Activated CD8-positive, alpha-beta T cell treated with anti-CD3 and anti-CD28 coated beads for 36 hours (primary cell): ENCODE measurements at regions of chr22 and their contacts with region 1.

Region 1: DNA sequence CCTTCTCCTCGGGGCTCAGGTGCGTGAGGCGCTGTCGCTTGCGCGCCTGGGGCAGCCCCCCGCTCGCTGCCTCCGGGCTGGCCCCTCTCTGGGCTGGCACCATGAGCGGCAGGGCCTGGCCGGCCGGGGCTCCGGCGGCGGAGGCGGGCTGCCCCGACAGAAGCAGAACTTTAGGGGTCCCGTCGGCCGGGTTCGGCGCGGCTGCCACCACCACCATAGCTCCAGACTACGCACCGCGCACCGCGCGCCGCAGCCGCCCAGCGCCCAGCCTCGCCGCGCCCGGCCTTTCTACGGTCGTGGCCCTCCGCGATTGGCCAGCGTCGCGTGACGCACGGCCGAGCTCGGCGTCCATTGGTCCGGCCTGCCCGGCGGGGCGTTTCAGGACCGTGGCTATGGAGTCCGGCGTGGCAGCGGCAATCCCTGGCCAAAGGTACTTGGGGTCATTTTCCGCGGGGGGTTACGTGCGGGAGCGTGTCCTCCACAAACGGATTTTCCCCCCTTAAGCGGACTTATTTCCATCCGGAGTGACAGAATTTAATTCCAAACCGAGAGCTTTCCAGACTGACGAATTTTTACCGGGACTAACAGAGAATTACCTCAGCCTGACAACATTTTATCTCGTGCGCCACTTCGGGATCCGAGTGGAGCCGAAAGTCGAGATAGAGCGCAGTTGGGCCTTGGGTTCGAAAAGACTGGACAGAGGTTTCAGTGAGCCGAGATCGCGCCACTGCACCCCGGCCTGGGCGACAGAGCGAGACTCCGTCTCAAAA is at the start of gene XBP1:
- DNase-seq: peak; percentile 89
- ATAC-seq: peak; percentile 89
- H3K4me3 Mint-ChIP-seq: peak within 1 kb of the TSS; percentile 95
- H3K27ac Mint-ChIP-seq: peak within 1 kb of the TSS; percentile 99
- H3K4me1 Mint-ChIP-seq: peaks cover 44% of the 10 kb centered on the region
- H3K27me3 Mint-ChIP-seq: no peaks in the 10 kb centered on the region
- CTCF ChIP-seq: no peak
- total RNA-seq, gene XBP1: 102 to 103 TPM

Region 2: DNA sequence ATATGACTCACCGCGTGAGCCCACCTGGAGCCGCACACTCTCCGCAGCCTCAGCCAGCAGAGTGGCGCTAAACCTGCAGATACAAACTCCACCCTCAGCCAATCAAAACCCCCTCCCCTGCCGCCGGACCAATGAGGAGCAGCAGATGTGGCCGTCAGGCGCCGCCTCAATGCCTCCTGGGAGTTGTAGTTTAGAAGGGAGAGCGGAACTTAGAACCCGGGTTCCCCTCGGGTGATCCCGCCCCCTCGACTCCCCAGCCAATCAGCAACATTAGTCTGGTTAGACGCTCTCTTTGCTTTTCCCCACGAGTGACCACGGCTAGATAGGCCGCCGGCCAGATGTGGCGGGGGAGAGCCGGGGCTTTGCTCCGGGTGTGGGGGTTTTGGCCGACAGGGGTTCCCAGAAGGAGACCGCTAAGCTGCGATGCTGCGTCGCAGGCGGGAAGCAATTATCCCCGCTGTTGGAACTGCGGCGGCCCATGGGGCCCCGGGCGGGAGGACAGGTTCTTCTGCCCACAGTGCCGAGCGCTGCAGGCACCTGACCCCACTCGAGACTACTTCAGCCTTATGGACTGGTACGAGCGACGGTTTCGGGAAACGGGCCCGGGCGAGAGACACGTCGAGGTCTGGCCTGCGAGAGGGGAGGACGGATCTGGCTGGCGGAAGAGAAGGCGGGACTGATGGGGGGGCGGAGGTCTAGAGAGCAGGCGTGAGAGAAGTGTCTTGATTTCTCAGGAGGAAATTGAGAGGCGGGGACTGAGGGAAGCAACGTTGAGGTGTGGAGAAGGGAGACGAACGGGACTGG is 58.5 kb before region 1 on chr22 and contains the starts of genes CHEK2 and HSCB:
- CTCF ChIA-PET with region 1: no interaction called
- POLR2A ChIA-PET with region 1: interaction called, 13 read pairs
- intact Hi-C with region 1: no loop called
- DNase-seq: peak; percentile 99
- ATAC-seq: peak; percentile 92
- H3K4me3 Mint-ChIP-seq: peak within 1 kb of the TSS; percentile 94
- H3K27ac Mint-ChIP-seq: peak within 1 kb of the TSS; percentile 96
- H3K4me1 Mint-ChIP-seq: peaks cover 22% of the 10 kb centered on the region
- H3K27me3 Mint-ChIP-seq: no peaks in the 10 kb centered on the region
- CTCF ChIP-seq: no peak
- total RNA-seq, gene CHEK2: 15.4 to 17.3 TPM
- total RNA-seq, gene HSCB: 16.5 to 17.5 TPM

Region 3: DNA sequence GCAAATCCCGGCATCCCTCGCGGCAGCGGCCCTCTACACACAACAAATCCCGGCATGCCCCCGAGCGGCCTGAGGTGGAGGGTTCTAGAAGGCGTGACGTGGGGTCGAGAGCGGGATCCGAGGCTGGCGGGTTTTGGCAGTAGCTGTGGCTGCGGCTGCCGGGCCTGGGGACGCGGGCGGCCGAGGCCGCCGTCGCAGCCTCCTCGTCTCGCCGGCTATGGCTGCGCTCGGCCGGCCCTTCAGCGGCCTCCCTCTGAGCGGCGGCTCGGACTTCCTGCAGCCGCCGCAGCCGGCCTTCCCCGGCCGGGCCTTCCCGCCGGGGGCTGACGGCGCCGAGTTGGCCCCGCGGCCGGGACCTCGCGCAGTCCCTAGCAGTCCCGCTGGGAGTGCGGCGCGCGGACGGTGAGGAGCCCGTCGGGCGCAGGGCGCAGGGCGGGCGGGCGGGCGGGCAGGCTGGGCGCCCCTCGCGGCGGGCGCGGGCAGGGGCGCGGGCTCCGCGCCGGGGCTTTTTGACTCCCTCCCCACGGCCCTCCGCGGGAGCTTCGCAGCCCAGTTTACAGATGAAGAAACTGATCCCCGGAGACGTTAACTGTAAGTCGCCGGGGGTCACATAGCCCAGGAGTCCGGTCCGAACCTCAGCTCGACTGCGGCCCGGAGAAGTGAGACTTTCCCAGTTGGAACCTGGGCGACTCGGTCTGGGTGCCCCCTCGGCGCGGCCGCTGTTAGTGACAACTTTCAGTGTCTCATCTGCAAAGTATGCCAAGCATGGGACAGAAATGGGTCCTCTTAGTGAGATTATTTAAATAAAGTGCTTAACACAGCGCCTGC is 27.6 kb before region 1 on chr22 and contains the start of gene CCDC117:
- CTCF ChIA-PET with region 1: interaction called, 18 read pairs
- POLR2A ChIA-PET with region 1: interaction called, 55 read pairs
- intact Hi-C with region 1: no loop called
- DNase-seq: peak; percentile 97
- ATAC-seq: peak; percentile 95
- H3K4me3 Mint-ChIP-seq: peak within 1 kb of the TSS; percentile 91
- H3K27ac Mint-ChIP-seq: peak within 1 kb of the TSS; percentile 93
- H3K4me1 Mint-ChIP-seq: peaks cover 22% of the 10 kb centered on the region
- H3K27me3 Mint-ChIP-seq: no peaks in the 10 kb centered on the region
- CTCF ChIP-seq: peak; percentile 44
- total RNA-seq, gene CCDC117: 25.5 to 26.2 TPM

Region 4: GRCh38 chr22:28810821-28811491 is 10.5 kb after region 1 on chr22:
- CTCF ChIA-PET with region 1: interaction called, 18 read pairs
- POLR2A ChIA-PET with region 1: interaction called, 60 read pairs
- intact Hi-C with region 1: no loop called
- DNase-seq: peak; percentile 66
- ATAC-seq: peak; percentile 28
- H3K4me3 Mint-ChIP-seq: peak overlapping the region; percentile 65
- H3K27ac Mint-ChIP-seq: peak overlapping the region; percentile 83
- H3K4me1 Mint-ChIP-seq: peaks cover 62% of the 10 kb centered on the region
- H3K27me3 Mint-ChIP-seq: no peaks in the 10 kb centered on the region
- CTCF ChIP-seq: no peak

Region 5: DNA sequence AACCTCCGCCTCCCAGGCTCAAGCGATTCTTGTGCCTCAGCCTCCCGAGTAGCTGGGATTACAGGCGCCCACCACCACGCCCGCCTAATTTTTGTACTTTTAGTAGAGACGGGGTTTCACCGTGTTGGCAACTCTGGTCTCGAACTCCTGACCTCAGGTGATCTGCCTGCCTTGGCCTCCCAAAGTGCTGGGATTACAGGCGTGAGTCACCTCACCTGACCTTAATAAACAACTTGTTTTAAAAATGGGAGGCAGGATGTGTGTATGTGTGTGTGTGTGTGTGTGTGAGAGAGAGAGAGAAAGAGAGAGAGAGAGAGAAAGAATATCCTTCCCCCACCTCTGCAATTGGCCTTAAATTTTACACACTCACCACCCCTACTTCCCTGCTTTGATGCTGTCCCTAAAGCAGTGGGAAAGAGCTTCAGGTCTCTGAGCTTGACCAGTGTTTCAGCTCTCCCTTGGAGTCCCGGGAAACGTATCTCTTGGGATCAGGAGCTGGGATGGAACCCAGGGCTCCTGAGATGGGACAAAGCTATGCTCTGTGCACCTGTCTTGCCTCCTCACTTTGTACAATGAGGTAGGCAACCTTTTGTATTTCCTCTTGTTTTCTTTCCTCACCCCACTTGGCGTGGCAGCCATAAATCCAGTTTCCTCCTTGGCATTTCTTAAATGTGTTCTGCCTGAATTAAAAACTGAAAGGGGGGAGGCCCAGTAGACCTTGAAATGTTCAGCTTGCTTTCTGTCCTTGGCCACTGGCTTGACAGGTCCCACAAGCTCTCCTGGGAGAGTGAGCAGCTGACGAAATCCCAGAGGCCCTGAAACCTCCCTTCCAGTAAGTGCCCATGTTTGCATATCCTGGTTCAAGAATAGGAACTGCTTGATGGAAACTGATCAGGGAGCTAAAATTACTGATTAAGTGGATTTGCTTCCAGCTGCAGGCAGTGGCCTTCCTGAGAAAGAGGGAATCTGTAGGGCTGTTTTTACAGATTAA is 17.7 kb after region 1 on chr22:
- CTCF ChIA-PET with region 1: interaction called, 8 read pairs
- POLR2A ChIA-PET with region 1: interaction called, 60 read pairs
- intact Hi-C with region 1: no loop called
- DNase-seq: no peak
- ATAC-seq: peak; percentile 27
- H3K4me3 Mint-ChIP-seq: no peak overlapping the region
- H3K27ac Mint-ChIP-seq: no peak overlapping the region
- H3K4me1 Mint-ChIP-seq: peaks cover 62% of the 10 kb centered on the region
- H3K27me3 Mint-ChIP-seq: no peaks in the 10 kb centered on the region
- CTCF ChIP-seq: no peak

Region 6: GRCh38 chr22:28935713-28936112 is 135.2 kb after region 1 on chr22:
- CTCF ChIA-PET with region 1: no interaction called
- POLR2A ChIA-PET with region 1: no interaction called
- intact Hi-C with region 1: no loop called
- DNase-seq: no peak
- ATAC-seq: no peak
- H3K4me3 Mint-ChIP-seq: no peak overlapping the region
- H3K27ac Mint-ChIP-seq: no peak overlapping the region
- H3K4me1 Mint-ChIP-seq: no peaks in the 10 kb centered on the region
- H3K27me3 Mint-ChIP-seq: peaks cover 48% of the 10 kb centered on the region
- CTCF ChIP-seq: peak; percentile 31